Activated CD4-positive, alpha-beta T cell treated with anti-CD3 and anti-CD28 coated beads for 36 hours (primary cell): ENCODE measurements at regions of chr14 and their contacts with region 1.

Region 1: GRCh38 chr14:49767562-49768300 is at the start of gene KLHDC2:
- DNase-seq: peak; percentile 94
- ATAC-seq: peak; percentile 79
- H3K4me3 Mint-ChIP-seq: peak within 1 kb of the TSS; percentile 96
- H3K27ac Mint-ChIP-seq: peak within 1 kb of the TSS; percentile 99
- H3K4me1 Mint-ChIP-seq: peaks cover 30% of the 10 kb centered on the region
- H3K27me3 Mint-ChIP-seq: no peaks in the 10 kb centered on the region
- total RNA-seq, gene KLHDC2: 16.0 to 22.4 TPM

Region 2: DNA sequence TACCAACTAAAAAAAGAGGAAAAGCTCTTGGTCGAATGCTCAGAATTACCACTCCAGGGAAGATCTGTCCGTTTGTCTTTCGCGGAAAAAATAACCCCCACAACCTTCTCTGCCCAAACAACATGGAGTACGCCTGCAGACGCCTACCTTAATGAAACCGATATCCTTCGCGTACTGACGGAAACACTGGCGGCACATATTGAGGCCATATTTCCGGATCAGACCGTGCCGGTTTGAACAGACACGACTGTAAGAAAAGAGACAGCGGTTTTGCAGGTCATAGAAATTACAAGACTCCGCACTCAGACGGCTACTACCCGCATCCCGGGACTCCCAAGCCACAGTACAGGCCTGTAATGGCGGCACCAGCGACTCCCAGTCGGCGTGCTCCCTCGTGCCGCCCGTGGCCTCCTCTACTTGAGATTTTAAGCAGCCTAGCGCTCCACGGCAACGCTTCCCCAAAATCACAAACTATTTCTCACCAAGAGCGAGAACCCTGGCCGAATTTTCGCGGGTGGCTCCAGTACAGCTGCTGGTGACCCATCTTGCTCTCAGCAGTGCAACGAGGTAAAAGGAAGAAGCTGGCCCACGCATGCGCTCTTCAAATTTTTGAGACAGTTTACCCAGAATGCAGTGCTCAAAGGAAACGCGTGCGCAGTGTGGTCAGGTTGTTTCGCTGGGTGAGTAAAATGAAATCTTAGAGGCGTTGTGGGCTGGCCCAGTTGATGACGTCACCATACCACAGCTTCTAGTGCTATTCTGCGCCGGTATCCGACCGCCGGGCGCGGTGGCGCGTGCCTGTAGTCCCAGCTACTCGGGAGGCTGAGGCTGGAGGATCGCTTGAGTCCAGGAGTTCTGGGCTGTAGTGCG is 181.7 kb before region 1 on chr14 and contains the start of gene RPS29:
- CTCF ChIA-PET with region 1: interaction called, 3 read pairs
- POLR2A ChIA-PET with region 1: no interaction called
- intact Hi-C with region 1: loop called in 1 of 2 experiments (anchors 1 kb)
- DNase-seq: peak; percentile 99
- ATAC-seq: peak; percentile 84
- H3K4me3 Mint-ChIP-seq: peak within 1 kb of the TSS; percentile 92
- H3K27ac Mint-ChIP-seq: peak within 1 kb of the TSS; percentile 96
- H3K4me1 Mint-ChIP-seq: peaks cover 40% of the 10 kb centered on the region
- H3K27me3 Mint-ChIP-seq: no peaks in the 10 kb centered on the region
- total RNA-seq, gene RPS29: 481 to 1,987 TPM

Region 3: DNA sequence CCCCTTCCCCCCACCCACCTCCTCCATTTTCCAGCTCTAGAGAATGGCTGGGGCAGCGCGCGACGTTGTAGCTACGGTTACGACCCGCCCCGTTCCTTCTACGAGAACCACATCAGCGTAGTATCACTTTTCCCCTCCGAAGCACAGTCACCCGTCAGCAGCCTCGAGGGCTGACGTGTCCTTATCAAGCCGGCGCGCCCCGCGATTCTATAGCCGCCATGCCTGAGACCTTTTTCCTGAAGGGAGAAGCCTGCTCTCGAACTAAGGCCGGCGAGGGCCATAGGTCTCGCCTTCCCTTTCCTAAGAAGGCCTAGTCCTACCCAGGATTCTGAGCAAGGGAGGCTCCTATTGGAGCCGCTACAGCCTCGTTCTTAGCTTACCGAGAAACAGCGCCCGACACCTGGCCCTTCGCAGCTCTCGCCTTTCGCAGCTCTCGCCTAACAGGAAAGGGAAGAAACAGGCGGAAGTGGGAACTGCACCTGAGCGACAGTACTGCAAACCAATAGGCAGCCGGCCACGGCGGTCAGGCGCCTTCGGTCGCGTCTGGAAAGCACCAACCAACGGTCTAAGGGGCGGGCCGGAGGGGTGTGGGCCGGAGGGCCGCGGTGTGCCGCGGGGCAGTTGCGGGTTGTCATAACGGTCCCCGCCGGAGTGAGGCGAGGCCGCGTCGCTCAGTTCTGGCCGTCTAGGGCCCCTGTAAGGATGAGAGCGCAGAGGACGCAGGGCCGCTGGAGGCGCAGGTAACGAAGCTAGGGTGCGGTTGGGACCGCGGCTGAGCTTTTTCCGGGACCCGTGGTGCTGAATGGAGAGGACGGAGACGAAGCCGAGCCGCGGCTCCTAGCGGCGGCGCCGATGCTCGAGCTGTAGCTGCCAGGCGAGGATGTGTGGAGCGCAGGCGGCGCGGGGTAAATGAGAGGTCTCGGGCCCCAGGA is 147.3 kb before region 1 on chr14 and contains the starts of genes MGAT2 and RPL36AL:
- CTCF ChIA-PET with region 1: interaction called, 17 read pairs
- POLR2A ChIA-PET with region 1: interaction called, 28 read pairs
- intact Hi-C with region 1: loop called in 1 of 2 experiments (anchors 1 kb)
- DNase-seq: peak; percentile 97
- ATAC-seq: peak; percentile 90
- H3K4me3 Mint-ChIP-seq: peak within 1 kb of the TSS; percentile 93
- H3K27ac Mint-ChIP-seq: peak within 1 kb of the TSS; percentile 97
- H3K4me1 Mint-ChIP-seq: peaks cover 51% of the 10 kb centered on the region
- H3K27me3 Mint-ChIP-seq: no peaks in the 10 kb centered on the region
- total RNA-seq, gene MGAT2: 23.8 to 32.2 TPM
- total RNA-seq, gene RPL36AL: 272 to 309 TPM

Region 4: DNA sequence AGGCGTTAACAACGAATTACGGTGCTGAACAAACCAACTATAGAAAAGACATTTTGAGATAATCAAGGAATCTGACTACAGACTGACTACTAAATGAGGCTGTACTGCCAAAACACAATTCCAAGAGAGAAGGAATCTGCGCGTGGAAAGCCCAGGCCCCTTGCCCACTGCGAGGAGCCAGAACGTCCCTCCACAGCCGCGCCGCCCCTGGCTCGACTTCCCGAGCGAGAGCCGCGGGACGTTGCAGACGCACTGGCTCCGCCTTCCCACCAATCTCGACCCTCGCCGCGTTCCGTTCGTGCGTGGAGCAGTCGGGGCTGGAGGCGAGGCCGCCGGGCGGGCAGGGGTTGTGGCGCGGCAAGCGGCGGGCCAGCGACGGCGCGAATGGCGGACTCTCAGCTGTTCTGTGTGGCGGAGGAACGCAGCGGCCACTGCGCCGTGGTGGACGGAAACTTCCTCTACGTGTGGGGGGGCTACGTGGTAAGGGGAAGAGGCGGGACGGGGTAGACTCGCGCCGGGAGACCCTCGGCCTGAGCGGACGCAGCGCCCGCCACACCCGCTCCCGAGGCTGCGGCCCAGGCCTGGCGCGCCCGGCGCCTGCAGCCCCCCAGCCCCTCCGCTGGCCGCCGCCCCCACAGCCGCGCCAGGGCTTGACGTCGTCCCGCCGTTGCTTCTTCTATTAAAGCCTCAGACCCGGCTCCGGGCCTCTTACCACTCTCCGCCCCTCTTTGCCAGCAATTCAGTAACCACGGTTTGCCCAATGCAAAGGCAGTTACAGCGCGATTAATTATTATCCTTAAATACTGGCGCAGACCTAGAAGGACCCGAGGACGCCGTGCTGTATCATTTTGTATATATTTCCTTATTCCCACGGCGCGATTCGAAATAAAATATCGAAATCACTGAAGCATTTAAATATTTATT is 74.7 kb before region 1 on chr14 and contains the start of gene KLHDC1:
- CTCF ChIA-PET with region 1: interaction called, 10 read pairs
- POLR2A ChIA-PET with region 1: interaction called, 7 read pairs
- intact Hi-C with region 1: loop called (anchors 1 to 2 kb)
- DNase-seq: peak; percentile 86
- ATAC-seq: peak; percentile 63
- H3K4me3 Mint-ChIP-seq: peak within 1 kb of the TSS; percentile 72
- H3K27ac Mint-ChIP-seq: peak within 1 kb of the TSS; percentile 92
- H3K4me1 Mint-ChIP-seq: peaks cover 42% of the 10 kb centered on the region
- H3K27me3 Mint-ChIP-seq: no peaks in the 10 kb centered on the region
- total RNA-seq, gene KLHDC1: 0.81 to 1.3 TPM

Region 5: GRCh38 chr14:49852301-49853157 is 84.8 kb after region 1 on chr14 and contains the start of gene NEMF:
- CTCF ChIA-PET with region 1: interaction called, 16 read pairs
- POLR2A ChIA-PET with region 1: interaction called, 15 read pairs
- intact Hi-C with region 1: loop called in 1 of 2 experiments (anchors 5 kb)
- DNase-seq: peak; percentile 86
- ATAC-seq: peak; percentile 79
- H3K4me3 Mint-ChIP-seq: peak within 1 kb of the TSS; percentile 97
- H3K27ac Mint-ChIP-seq: peak within 1 kb of the TSS; percentile 98
- H3K4me1 Mint-ChIP-seq: peaks cover 39% of the 10 kb centered on the region
- H3K27me3 Mint-ChIP-seq: no peaks in the 10 kb centered on the region
- total RNA-seq, gene NEMF: 62.4 to 97.9 TPM

Region 6: DNA sequence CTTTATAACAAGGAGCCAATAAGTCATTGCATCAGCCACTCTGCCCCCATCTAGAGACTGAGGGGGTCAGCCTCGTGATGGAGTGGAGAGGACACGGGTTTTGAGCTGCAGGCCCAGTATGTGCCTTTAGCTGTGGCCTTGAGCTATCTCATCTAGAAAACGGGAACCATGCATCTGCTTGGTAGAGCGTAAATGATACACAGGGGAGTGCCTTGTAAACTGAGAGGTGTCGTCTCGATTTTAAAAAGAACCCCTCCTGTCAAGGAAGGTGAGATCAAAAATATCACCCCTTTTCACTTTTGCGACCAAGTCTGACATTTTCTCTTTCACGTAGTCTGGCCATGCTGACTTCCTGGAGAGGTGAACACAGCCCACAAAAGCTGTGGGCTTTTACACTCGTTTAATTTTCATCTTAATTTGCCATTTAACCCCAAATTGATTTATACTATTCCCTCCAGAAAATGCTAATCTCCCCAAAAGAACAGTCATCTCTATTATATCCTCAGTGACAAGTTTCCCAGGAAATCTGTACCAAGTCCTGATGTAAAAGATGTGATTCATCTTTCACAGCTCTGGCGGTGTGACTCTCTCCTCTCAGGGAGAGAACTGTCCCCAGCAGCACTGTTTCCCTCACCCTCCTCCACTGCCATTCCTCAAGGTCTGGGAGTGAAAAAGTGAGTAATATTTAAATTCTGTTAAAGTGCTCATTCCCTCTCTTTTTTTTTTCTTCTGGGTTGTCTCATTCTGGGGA is 318.0 kb after region 1 on chr14:
- CTCF ChIA-PET with region 1: no interaction called
- POLR2A ChIA-PET with region 1: no interaction called
- intact Hi-C with region 1: loop called in 1 of 2 experiments (anchors 1 kb)
- DNase-seq: peak; percentile 71
- ATAC-seq: peak; percentile 27
- H3K4me3 Mint-ChIP-seq: peak overlapping the region; percentile 45
- H3K27ac Mint-ChIP-seq: peak overlapping the region; percentile 94
- H3K4me1 Mint-ChIP-seq: peaks cover 94% of the 10 kb centered on the region
- H3K27me3 Mint-ChIP-seq: no peaks in the 10 kb centered on the region

Region 7: GRCh38 chr14:50532502-50533240 is 764.9 kb after region 1 on chr14 and contains the start of gene MAP4K5:
- CTCF ChIA-PET with region 1: no interaction called
- POLR2A ChIA-PET with region 1: no interaction called
- intact Hi-C with region 1: loop called in 1 of 2 experiments (anchors 2 kb)
- DNase-seq: peak; percentile 94
- ATAC-seq: peak; percentile 96
- H3K4me3 Mint-ChIP-seq: peak within 1 kb of the TSS; percentile 90
- H3K27ac Mint-ChIP-seq: peak within 1 kb of the TSS; percentile 86
- H3K4me1 Mint-ChIP-seq: peaks cover 47% of the 10 kb centered on the region
- H3K27me3 Mint-ChIP-seq: no peaks in the 10 kb centered on the region
- total RNA-seq, gene MAP4K5: 19.1 to 31.2 TPM